ENCODE measurements at regions of chr5 and their contacts with region 1.

Region 1: DNA sequence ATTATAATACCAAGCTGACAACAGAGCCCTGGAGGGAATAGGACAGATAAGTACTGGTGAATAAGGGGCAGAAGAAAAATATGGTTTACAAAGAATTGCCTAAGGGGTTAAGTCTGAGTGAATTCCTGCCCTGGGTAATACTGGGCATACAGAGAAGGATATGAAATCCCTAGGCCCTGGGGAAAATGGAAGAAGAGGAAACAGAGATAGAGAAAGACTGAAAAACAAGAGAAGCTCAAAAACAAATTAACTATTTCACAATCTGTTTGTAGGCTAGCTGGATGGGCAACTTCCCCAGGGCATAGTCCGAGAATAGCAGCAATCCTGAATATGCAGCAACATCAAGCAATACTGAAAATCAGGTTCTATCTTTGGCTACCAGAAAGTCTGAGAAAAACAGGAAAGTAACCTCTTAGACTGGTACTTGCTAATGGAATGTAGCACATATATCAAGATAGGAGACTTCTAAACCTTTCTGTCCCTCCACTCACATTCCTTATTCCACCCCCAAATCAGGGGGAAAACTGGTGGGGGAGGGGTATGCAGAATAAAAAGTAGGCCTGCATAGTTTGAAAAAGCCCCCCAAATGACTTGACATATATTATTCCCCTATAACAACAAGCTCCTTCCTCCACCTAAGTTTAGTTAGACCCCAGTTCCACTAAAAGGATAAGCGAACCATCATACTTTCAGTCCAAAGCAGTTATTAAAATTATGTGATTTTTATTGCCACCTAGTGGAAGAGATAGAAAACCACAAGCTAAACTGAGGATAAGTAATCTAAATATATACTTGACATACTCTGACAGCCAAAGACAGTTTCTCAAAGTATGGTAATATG is 20.6 kb downstream of the SLC38A9 start:
- DNase-seq: peak; percentile 27 to 55
- ATAC-seq: peak; percentile 34 to 77; a peak in 4 of 6 replicates
- H3K4me3 ChIP-seq: no peak overlapping the region
- H3K27ac ChIP-seq: peak overlapping the region; percentile 23 to 61; a peak in 5 of 6 replicates
- H3K4me1 ChIP-seq: peaks cover 25% of the 10 kb centered on the region
- CTCF ChIP-seq: peak; percentile 85
- EP300 ChIP-seq: no peak
- POLR2A ChIP-seq: no peak
- RAD21 ChIP-seq: peak; percentile 80 to 87

Region 2: GRCh38 chr5:55344392-55344992 is 347.0 kb before region 1 on chr5:
- CTCF ChIA-PET with region 1: interaction called, 14 read pairs
- POLR2A ChIA-PET with region 1: no interaction called
- DNase-seq: peak; percentile 21 to 71
- ATAC-seq: peak in 1 of 2 experiments; percentile 62; a peak in 2 of 6 replicates
- H3K4me3 ChIP-seq: no peak overlapping the region
- H3K27ac ChIP-seq: no peak overlapping the region
- H3K4me1 ChIP-seq: no peaks in the 10 kb centered on the region
- CTCF ChIP-seq: peak; percentile 83
- EP300 ChIP-seq: no peak
- POLR2A ChIP-seq: no peak
- RAD21 ChIP-seq: peak; percentile 62 to 64

Region 3: DNA sequence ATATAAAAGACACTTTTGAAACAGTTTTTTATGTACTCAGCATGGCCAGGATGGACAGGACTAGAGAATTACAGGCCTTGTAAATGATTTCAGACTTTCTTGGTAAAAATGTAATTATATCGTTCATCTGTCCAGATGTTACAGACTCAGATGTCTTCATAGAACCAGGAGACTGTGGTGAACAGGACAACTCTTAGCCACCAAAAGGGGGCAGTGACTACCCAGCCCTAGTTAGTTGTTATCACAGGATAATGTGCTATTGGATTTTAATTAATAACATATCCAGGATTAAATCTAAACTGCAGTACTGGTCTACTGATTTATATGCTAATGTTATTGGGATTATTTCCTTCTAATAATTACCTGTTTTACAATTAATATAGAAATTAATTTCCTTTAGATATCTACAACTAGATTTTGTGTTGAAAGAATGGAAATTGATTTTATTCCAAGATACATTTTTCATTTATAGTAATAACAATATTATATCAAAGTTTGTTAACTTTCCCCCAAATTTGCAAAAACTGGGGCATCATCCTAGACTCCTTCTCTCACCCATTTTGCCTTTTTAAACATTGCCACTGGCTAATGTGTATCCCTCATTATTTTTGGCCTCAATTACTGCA is 284.3 kb before region 1 on chr5:
- CTCF ChIA-PET with region 1: interaction called, 33 read pairs
- POLR2A ChIA-PET with region 1: no interaction called
- DNase-seq: peak; percentile 25 to 59
- ATAC-seq: peak; percentile 73 to 91; a peak in 5 of 6 replicates
- H3K4me3 ChIP-seq: no peak overlapping the region
- H3K27ac ChIP-seq: no peak overlapping the region
- H3K4me1 ChIP-seq: no peaks in the 10 kb centered on the region
- CTCF ChIP-seq: peak; percentile 82
- EP300 ChIP-seq: no peak
- POLR2A ChIP-seq: no peak
- RAD21 ChIP-seq: peak; percentile 83 to 84

Region 4: GRCh38 chr5:55492449-55492848 is 199.0 kb before region 1 on chr5:
- CTCF ChIA-PET with region 1: no interaction called
- POLR2A ChIA-PET with region 1: no interaction called
- DNase-seq: no peak
- ATAC-seq: no peak
- H3K4me3 ChIP-seq: no peak overlapping the region
- H3K27ac ChIP-seq: no peak overlapping the region
- H3K4me1 ChIP-seq: no peaks in the 10 kb centered on the region
- CTCF ChIP-seq: no peak
- EP300 ChIP-seq: no peak
- POLR2A ChIP-seq: no peak
- RAD21 ChIP-seq: no peak

Measured in A549 (cell line).